CD4-positive, alpha-beta T cell (primary cell): ENCODE measurements at regions of chr5 and their contacts with region 1.

Region 1: DNA sequence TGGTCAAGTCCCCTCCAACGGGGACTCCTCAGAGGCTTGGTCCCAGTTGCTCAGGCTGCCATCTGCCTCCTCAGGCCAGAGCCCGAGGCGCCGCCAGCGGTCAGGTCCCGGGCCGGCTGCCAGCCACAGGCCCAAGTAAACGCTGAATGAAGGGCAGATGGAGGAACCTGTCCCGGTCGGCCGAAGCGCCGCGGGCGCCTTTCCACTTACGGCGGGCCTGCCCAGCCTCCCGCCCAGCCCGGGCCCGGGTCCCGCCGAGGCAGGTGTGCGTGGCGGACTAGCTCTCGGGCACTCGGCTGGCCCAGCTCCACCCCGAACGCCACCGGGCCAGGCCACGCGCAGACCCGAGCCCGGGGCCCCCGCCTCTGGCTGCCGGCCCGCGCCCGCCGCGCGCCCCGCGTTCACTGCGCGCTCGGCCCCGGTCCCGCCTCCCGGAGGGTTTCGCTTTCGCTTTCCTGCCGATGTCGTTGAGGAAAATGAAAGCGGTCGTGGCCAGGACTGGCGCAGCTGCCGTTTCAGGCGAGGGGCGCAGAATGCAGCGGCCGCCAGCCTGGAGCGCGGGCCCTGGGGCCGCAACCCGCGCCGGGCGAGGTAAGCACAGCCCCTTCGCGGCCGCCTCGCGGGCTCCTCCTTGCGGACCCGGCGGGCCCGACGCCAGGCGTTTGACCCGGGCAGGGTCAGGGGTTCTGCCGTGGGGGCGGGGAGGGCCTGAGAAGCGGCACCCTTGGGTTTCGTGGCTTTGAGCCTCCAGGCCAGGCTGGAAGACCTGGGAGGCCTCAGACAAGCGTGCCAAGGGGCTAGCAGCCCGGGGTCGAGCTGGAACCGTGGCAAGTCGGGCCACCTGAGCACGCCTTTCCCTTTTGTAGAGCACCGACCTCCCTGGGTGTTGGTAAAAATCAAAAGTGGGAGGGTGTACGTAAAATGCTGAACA is 41.2 kb downstream of the SLC22A5 start:
- DNase-seq: peak; percentile 69 to 93 (median 76)
- ATAC-seq: peak; percentile 69
- H3K4me3 ChIP-seq: peak overlapping the region; percentile 91
- H3K4me3 Mint-ChIP-seq: peak overlapping the region; percentile 96
- H3K27ac ChIP-seq: peak overlapping the region; percentile 98
- H3K27ac Mint-ChIP-seq: peak overlapping the region; percentile 98
- H3K4me1 ChIP-seq: peaks cover 64% of the 10 kb centered on the region
- H3K4me1 Mint-ChIP-seq: peaks cover 92% of the 10 kb centered on the region
- H3K27me3 ChIP-seq: no peaks in the 10 kb centered on the region
- H3K27me3 Mint-ChIP-seq: no peaks in the 10 kb centered on the region
- CTCF ChIP-seq: peak; percentile 74

Region 2: DNA sequence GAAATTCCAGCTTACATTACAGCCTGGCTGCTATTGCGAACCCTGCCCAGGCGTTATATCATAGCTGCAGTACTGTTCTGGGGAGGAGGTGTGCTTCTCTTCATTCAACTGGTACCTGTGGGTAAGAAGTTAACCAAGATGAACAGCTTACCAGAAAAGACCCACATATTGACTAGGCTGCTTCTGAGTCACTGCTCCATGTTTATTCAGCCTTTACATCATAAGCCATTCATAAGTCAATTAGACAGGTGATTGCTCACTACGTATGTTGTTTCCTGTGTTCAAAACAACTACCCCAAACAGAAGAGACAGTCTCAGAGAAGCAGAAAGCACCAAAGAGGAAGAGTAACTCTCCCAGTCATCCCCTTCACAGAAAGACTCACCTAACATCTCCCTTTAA is 75.9 kb before region 1 on chr5:
- CTCF ChIA-PET with region 1: no interaction called
- POLR2A ChIA-PET with region 1: no interaction called
- intact Hi-C with region 1: no loop called
- DNase-seq: peak in 1 of 14 experiments; percentile 4
- ATAC-seq: peak; percentile 63
- H3K4me3 ChIP-seq: no peak overlapping the region
- H3K4me3 Mint-ChIP-seq: no peak overlapping the region
- H3K27ac ChIP-seq: no peak overlapping the region
- H3K27ac Mint-ChIP-seq: no peak overlapping the region
- H3K4me1 ChIP-seq: no peaks in the 10 kb centered on the region
- H3K4me1 Mint-ChIP-seq: no peaks in the 10 kb centered on the region
- H3K27me3 ChIP-seq: no peaks in the 10 kb centered on the region
- H3K27me3 Mint-ChIP-seq: no peaks in the 10 kb centered on the region
- CTCF ChIP-seq: no peak

Region 3: GRCh38 chr5:132394667-132395259 is 16.0 kb before region 1 on chr5:
- CTCF ChIA-PET with region 1: interaction called, 5 read pairs
- POLR2A ChIA-PET with region 1: interaction called, 19 read pairs
- intact Hi-C with region 1: no loop called
- DNase-seq: no peak
- ATAC-seq: no peak
- H3K4me3 ChIP-seq: no peak overlapping the region
- H3K4me3 Mint-ChIP-seq: no peak overlapping the region
- H3K27ac ChIP-seq: no peak overlapping the region
- H3K27ac Mint-ChIP-seq: peak overlapping the region; percentile 84
- H3K4me1 ChIP-seq: peaks cover 60% of the 10 kb centered on the region
- H3K4me1 Mint-ChIP-seq: peaks cover 76% of the 10 kb centered on the region
- H3K27me3 ChIP-seq: no peaks in the 10 kb centered on the region
- H3K27me3 Mint-ChIP-seq: no peaks in the 10 kb centered on the region
- CTCF ChIP-seq: no peak

Region 4: GRCh38 chr5:132431632-132432031 is 20.9 kb after region 1 on chr5:
- CTCF ChIA-PET with region 1: interaction called, 3 read pairs
- POLR2A ChIA-PET with region 1: interaction called, 81 read pairs
- intact Hi-C with region 1: no loop called
- DNase-seq: peak in 1 of 14 experiments; percentile 66
- ATAC-seq: peak; percentile 18
- H3K4me3 ChIP-seq: no peak overlapping the region
- H3K4me3 Mint-ChIP-seq: peak overlapping the region; percentile 8
- H3K27ac ChIP-seq: peak overlapping the region in 1 of 2 donors; percentile 85
- H3K27ac Mint-ChIP-seq: peak overlapping the region; percentile 93
- H3K4me1 ChIP-seq: peaks cover 90% of the 10 kb centered on the region
- H3K4me1 Mint-ChIP-seq: peaks cover 92% of the 10 kb centered on the region
- H3K27me3 ChIP-seq: no peaks in the 10 kb centered on the region
- H3K27me3 Mint-ChIP-seq: no peaks in the 10 kb centered on the region
- CTCF ChIP-seq: no peak

Region 5: GRCh38 chr5:132466433-132467286 is 55.9 kb after region 1 on chr5:
- CTCF ChIA-PET with region 1: interaction called, 9 read pairs
- POLR2A ChIA-PET with region 1: interaction called, 82 read pairs
- intact Hi-C with region 1: loop called in 1 of 2 experiments (anchors 5 kb)
- DNase-seq: peak in 13 of 14 experiments; percentile 56 to 90 (median 66)
- ATAC-seq: peak; percentile 63
- H3K4me3 ChIP-seq: peak overlapping the region; percentile 34
- H3K4me3 Mint-ChIP-seq: peak overlapping the region; percentile 85
- H3K27ac ChIP-seq: peak overlapping the region; percentile 69 to 73
- H3K27ac Mint-ChIP-seq: peak overlapping the region; percentile 97
- H3K4me1 ChIP-seq: peaks cover 88% of the 10 kb centered on the region
- H3K4me1 Mint-ChIP-seq: peaks cover 99% of the 10 kb centered on the region
- H3K27me3 ChIP-seq: no peaks in the 10 kb centered on the region
- H3K27me3 Mint-ChIP-seq: no peaks in the 10 kb centered on the region
- CTCF ChIP-seq: no peak

Region 6: GRCh38 chr5:132500931-132501630 is 90.4 kb after region 1 on chr5:
- CTCF ChIA-PET with region 1: interaction called, 18 read pairs
- POLR2A ChIA-PET with region 1: interaction called, 446 read pairs
- intact Hi-C with region 1: loop called in 1 of 2 experiments (anchors 2 kb)
- DNase-seq: peak; percentile 63 to 90 (median 73)
- ATAC-seq: peak; percentile 26
- H3K4me3 ChIP-seq: no peak overlapping the region
- H3K4me3 Mint-ChIP-seq: no peak overlapping the region
- H3K27ac ChIP-seq: peak overlapping the region in 1 of 2 donors; percentile 37
- H3K27ac Mint-ChIP-seq: peak overlapping the region; percentile 65
- H3K4me1 ChIP-seq: peaks cover 49% of the 10 kb centered on the region
- H3K4me1 Mint-ChIP-seq: peaks cover 29% of the 10 kb centered on the region
- H3K27me3 ChIP-seq: no peaks in the 10 kb centered on the region
- H3K27me3 Mint-ChIP-seq: peaks cover 3% of the 10 kb centered on the region
- CTCF ChIP-seq: peak; percentile 88